Common myeloid progenitor, CD34-positive (primary cell): ENCODE measurements at regions of chr5 and their contacts with region 1.

Region 1: DNA sequence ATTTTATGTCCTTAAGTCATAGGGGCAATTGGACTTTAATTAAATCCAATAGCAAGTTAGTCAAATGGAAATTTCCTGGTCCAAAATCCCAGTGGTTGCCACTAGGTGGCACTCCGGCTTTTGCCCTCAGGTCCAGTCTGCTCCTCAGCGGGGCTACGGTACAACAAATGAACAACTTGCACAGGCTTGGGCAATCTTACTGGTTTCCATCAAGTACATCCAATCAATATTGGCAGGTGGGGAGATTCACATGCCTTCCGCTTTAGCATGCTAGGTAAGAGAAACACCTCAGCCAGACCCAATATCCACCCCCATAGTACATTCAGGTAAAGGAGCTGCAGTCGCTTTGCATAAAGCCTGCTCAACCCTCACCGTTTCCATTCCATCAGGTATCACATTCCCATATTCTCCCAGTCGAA is 6.3 kb upstream of the MXD3 start:
- DNase-seq: peak; percentile 81 to 89 (median 83)
- H3K4me3 ChIP-seq: no peak overlapping the region
- H3K27ac ChIP-seq: no peak overlapping the region
- H3K4me1 ChIP-seq: peaks cover 4 to 25% (median 19%) of the 10 kb centered on the region in 4 experiments
- H3K27me3 ChIP-seq: no peaks in the 10 kb centered on the region

Region 2: GRCh38 chr5:177336112-177336511 is 18.1 kb after region 1 on chr5:
- CTCF ChIA-PET with region 1: interaction called, 162 read pairs
- POLR2A ChIA-PET with region 1: interaction called, 4 read pairs
- DNase-seq: peak; percentile 83 to 90 (median 89)
- H3K4me3 ChIP-seq: no peak overlapping the region
- H3K27ac ChIP-seq: no peak overlapping the region
- H3K4me1 ChIP-seq: peaks cover 6 to 27% (median 24%) of the 10 kb centered on the region in 4 experiments
- H3K27me3 ChIP-seq: no peaks in the 10 kb centered on the region

Region 3: DNA sequence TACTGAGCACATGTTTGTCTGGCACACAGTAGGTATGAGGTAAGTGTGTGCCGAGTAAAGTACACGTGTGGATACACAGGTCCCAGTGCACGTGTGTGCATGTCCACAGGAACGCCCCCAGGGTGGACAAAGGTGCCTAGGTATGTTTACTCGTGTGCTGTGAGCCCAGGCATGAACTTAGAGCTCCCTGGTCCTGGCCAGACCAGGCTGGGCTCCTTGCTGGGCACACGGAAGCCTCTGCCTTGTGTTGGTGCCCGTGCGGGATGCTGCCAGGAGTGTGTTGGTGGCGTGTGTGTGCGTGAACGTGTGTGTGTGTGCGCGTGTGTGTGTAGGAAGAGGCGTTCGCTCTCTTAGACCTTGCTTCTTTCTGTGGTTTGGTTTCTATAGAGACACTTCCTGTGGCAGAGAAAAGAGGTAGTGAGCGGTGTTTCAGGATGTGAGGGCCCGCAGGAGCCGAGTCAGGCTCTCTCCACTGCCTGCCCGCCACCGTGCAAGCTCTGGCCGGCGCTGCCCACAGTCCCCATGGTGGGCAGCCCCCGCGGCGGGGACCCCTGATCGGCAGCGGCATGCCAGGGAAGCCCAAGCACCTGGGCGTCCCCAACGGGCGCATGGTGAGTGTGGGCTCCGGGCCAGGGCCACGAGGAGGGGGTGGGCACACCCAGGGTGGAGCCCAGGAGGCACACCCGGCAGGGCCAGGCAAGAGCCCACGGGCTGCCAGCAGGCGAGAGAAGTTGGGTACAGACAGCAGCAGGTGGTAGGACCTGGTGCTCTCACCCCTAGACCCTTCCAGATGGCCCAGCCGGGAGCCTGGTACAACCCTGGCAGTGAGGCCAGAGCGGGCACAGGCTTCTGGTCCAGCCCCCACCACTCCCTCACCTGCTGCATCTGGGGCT is 39.7 kb after region 1 on chr5 and contains the start of gene RGS14:
- CTCF ChIA-PET with region 1: interaction called, 44 read pairs
- POLR2A ChIA-PET with region 1: no interaction called
- DNase-seq: peak; percentile 94 to 98 (median 96)
- H3K4me3 ChIP-seq: peak within 1 kb of the TSS; percentile 65 to 93 (median 84)
- H3K27ac ChIP-seq: peak within 1 kb of the TSS; percentile 77 to 85
- H3K4me1 ChIP-seq: peaks cover 8 to 83% (median 72%) of the 10 kb centered on the region in 4 experiments
- H3K27me3 ChIP-seq: no peaks in the 10 kb centered on the region

Region 4: GRCh38 chr5:177362610-177363507 is 44.9 kb after region 1 on chr5:
- CTCF ChIA-PET with region 1: interaction called, 44 read pairs
- POLR2A ChIA-PET with region 1: no interaction called
- DNase-seq: peak in 2 of 3 donors; percentile 61 to 70
- H3K4me3 ChIP-seq: peak overlapping the region in 6 of 7 experiments; percentile 2 to 74 (median 42)
- H3K27ac ChIP-seq: peak overlapping the region in 1 of 2 experiments; percentile 58
- H3K4me1 ChIP-seq: peaks cover 0 to 71% (median 60%) of the 10 kb centered on the region in 4 experiments
- H3K27me3 ChIP-seq: no peaks in the 10 kb centered on the region

Region 5: GRCh38 chr5:177370488-177371119 is 52.6 kb after region 1 on chr5:
- CTCF ChIA-PET with region 1: interaction called, 21 read pairs
- POLR2A ChIA-PET with region 1: no interaction called
- DNase-seq: peak; percentile 83 to 85 (median 85)
- H3K4me3 ChIP-seq: peak overlapping the region in 1 of 7 experiments; percentile 72
- H3K27ac ChIP-seq: no peak overlapping the region
- H3K4me1 ChIP-seq: peaks cover 0 to 48% (median 41%) of the 10 kb centered on the region in 4 experiments
- H3K27me3 ChIP-seq: no peaks in the 10 kb centered on the region

Region 6: DNA sequence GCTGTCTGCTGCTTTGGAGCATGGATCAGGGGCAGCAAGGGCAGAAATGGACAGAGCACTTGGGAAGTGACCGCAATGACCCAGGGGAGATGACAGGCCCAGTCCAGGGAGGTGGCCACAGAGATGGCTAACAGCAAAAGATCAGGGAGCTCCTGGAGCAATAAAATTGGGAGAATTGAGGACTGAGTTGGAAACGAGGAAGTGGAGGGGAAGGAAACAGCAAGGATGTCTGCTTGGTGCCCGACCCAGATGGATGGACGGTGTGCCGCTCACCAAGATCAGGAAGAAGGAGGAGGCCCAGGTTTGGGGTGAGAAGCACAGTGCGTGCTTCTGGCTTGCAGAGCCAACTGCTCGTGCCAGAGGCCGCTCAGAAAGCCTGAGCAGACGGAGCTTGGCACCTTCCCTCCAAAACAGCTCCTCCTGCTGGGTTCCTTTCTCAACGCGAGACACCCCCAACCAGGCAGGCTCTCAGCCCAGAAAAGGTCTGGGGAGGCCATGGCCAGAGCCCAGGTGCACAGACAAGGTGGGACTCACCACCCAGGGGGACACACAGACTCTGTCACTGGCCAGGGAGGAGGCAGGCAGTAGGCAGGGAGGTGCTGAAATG is 64.6 kb after region 1 on chr5:
- CTCF ChIA-PET with region 1: interaction called, 22 read pairs
- POLR2A ChIA-PET with region 1: no interaction called
- DNase-seq: peak; percentile 69 to 78 (median 76)
- H3K4me3 ChIP-seq: no peak overlapping the region
- H3K27ac ChIP-seq: no peak overlapping the region
- H3K4me1 ChIP-seq: peaks cover 5 to 35% (median 28%) of the 10 kb centered on the region in 4 experiments
- H3K27me3 ChIP-seq: no peaks in the 10 kb centered on the region